ENCODE measurements at regions of chr9 and their contacts with region 1.

Region 1: DNA sequence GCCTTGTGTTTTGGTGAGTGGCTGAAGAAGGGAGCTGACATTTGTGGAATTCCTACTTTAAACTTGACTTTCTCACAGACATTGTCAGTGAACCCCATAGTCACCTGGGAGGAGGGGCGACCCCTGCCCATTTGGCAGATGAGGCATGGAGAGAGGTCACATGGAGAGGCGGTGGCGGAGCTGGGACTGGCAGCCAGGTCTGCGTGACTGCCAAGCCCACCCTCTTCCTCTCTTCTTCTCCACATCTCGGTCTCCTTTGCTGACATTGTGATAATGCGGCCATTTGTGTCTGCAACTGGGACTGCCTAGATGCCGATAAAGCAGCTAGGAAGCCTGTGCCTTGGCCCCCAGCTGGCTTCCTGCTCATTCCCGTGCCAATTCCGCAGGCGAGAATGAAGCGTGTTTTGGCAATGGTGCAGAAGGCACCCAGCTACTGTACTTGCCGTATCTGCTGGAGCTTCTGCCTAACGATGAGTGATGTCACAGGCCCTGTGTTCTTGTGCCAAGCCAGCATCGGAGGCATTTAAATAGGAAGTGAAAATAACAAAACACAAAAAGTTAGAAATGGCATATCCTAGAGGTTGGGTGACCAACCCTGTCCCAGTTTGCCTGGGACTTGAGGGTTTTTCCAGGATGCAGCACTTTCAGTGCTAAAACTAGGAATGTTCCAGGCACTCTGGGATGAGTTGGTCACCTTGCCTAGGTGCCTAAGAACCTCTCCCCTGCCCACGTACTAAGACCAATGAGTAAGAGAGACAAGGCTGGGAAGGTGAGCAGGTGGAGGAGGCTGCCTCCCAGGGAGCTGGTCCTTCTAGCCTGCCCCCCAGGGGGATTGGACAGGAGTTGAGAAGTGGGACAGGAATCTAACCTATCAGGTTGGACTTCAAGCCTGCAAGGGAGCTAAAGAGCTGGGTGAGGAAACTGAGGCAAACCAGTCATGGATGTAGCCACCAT is 23.6 kb downstream of the OLFML2A start:
- DNase-seq: no peak
- H3K4me3 ChIP-seq: no peak overlapping the region
- H3K27ac ChIP-seq: no peak overlapping the region
- H3K4me1 ChIP-seq: peaks cover 0 to 12% (median 0%) of the 10 kb centered on the region in 4 experiments; a peak in 2 of 7 replicates
- H3K27me3 ChIP-seq: no peaks in the 10 kb centered on the region
- CTCF ChIP-seq: no peak
- EP300 ChIP-seq: no peak
- POLR2A ChIP-seq: no peak
- RAD21 ChIP-seq: no peak

Region 2: GRCh38 chr9:124754289-124754688 is 46.3 kb before region 1 on chr9:
- CTCF ChIA-PET with region 1: no interaction called
- POLR2A ChIA-PET with region 1: no interaction called
- DNase-seq: no peak
- H3K4me3 ChIP-seq: no peak overlapping the region
- H3K27ac ChIP-seq: no peak overlapping the region
- H3K4me1 ChIP-seq: peaks cover 7 to 37% (median 16%) of the 10 kb centered on the region in 4 experiments
- H3K27me3 ChIP-seq: no peaks in the 10 kb centered on the region
- CTCF ChIP-seq: peak in 2 of 3 experiments; percentile 51 to 55; a peak in 2 of 4 replicates
- EP300 ChIP-seq: no peak
- POLR2A ChIP-seq: no peak
- RAD21 ChIP-seq: peak; percentile 53 to 65

Region 3: GRCh38 chr9:124782661-124783574 is 17.7 kb before region 1 on chr9:
- CTCF ChIA-PET with region 1: interaction called, 281 read pairs
- POLR2A ChIA-PET with region 1: interaction called, 9 read pairs
- DNase-seq: peak in 1 of 2 experiments; percentile 48
- H3K4me3 ChIP-seq: no peak overlapping the region
- H3K27ac ChIP-seq: no peak overlapping the region
- H3K4me1 ChIP-seq: peaks cover 8 to 16% (median 13%) of the 10 kb centered on the region in 4 experiments
- H3K27me3 ChIP-seq: no peaks in the 10 kb centered on the region; a peak in 1 of 7 replicates
- CTCF ChIP-seq: no peak
- EP300 ChIP-seq: no peak
- POLR2A ChIP-seq: no peak
- RAD21 ChIP-seq: no peak; a peak in 1 of 4 replicates

Region 4: GRCh38 chr9:124788542-124789217 is 11.9 kb before region 1 on chr9:
- CTCF ChIA-PET with region 1: interaction called, 19 read pairs
- POLR2A ChIA-PET with region 1: interaction called, 3 read pairs
- DNase-seq: no peak
- H3K4me3 ChIP-seq: no peak overlapping the region
- H3K27ac ChIP-seq: no peak overlapping the region
- H3K4me1 ChIP-seq: no peaks in the 10 kb centered on the region; a peak in 1 of 7 replicates
- H3K27me3 ChIP-seq: no peaks in the 10 kb centered on the region
- CTCF ChIP-seq: no peak
- EP300 ChIP-seq: no peak
- POLR2A ChIP-seq: no peak
- RAD21 ChIP-seq: no peak

Region 5: DNA sequence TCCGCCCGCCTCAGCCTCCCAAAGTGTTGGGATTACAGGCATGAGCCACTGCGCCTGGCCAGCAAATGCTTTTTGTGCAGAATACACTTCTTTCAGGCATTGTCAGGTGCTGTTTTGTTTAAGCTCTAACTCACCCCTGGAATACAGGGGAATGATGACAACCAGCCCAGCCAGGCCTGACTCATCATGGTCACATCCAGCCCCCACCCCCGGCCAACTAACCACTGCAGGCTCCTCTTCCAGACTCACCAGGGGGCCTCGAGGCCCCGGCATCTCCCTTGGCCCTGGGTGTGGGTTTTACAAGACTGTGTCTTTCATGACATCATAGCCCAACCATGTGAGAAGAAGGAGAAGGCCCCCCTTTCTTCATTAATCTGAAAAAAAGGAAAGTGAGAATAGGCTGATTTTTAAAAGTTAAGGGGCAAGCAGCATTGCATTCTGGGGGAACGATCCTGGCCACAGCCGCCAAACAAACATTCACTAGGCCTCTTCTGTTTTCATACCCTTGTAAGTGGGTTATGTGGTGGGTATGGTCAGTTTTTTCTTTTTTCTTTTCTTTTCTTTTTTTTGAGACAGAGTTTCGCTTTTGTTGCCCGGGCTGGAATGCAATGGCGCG is 11.9 kb after region 1 on chr9:
- CTCF ChIA-PET with region 1: interaction called, 45 read pairs
- POLR2A ChIA-PET with region 1: interaction called, 18 read pairs
- DNase-seq: peak in 1 of 2 experiments; percentile 64
- H3K4me3 ChIP-seq: no peak overlapping the region
- H3K27ac ChIP-seq: no peak overlapping the region
- H3K4me1 ChIP-seq: peaks cover 10 to 24% (median 16%) of the 10 kb centered on the region in 4 experiments
- H3K27me3 ChIP-seq: no peaks in the 10 kb centered on the region
- CTCF ChIP-seq: no peak
- EP300 ChIP-seq: no peak
- POLR2A ChIP-seq: no peak
- RAD21 ChIP-seq: no peak